Aorta (tissue), 5 donors: ENCODE measurements at regions of chr2 and their contacts with region 1.

Region 1: GRCh38 chr2:187453078-187453641 is 5.1 kb upstream of the CALCRL start:
- DNase-seq: no peak
- ATAC-seq: no peak
- H3K4me3 ChIP-seq: no peak overlapping the region
- H3K27ac ChIP-seq: no peak overlapping the region
- H3K4me1 ChIP-seq: peaks cover 0 to 1% of the 10 kb centered on the region in 2 donors
- H3K27me3 ChIP-seq: no peaks in the 10 kb centered on the region

Region 2: DNA sequence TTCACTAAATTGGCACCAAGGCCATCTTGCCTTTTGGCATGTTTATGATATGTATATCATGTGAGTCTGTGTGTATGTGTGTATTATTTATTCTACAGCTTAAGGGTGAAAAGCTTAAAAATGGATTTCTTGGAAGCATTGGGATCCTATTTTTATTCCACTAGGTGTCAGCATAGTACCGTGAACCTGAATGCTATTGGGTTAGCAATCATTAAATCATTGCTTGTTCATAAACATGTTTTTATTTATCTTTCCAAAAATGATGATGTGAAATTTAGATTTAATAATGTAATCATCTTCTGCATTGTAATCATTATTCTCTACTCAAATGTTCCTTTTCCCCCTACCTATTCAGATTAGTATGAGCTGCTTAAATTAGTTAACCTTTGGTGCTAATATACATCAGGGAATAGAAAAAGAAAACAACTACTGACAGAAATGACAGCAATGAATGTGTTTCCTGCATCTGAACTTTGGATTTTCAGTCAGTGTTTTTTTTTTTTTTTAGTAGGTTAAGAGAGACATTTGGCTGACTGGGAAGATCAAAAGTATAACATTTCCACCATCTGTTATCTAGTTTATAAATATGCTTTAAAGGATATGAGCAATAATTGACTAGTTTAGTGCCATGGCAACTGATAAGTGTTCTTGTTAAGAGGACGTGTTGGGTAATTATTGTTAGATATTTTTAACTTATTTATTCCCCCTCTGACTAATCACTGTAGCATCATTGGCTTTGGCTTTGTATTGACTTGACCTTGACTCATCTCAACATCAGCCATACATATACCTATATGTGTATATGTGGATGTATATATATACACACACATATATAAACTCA is 590.1 kb before region 1 on chr2:
- intact Hi-C with region 1: loop called (anchors 2 to 5 kb)
- DNase-seq: no peak
- ATAC-seq: no peak
- H3K4me3 ChIP-seq: no peak overlapping the region
- H3K27ac ChIP-seq: no peak overlapping the region
- H3K4me1 ChIP-seq: no peaks in the 10 kb centered on the region
- H3K27me3 ChIP-seq: no peaks in the 10 kb centered on the region

Region 3: DNA sequence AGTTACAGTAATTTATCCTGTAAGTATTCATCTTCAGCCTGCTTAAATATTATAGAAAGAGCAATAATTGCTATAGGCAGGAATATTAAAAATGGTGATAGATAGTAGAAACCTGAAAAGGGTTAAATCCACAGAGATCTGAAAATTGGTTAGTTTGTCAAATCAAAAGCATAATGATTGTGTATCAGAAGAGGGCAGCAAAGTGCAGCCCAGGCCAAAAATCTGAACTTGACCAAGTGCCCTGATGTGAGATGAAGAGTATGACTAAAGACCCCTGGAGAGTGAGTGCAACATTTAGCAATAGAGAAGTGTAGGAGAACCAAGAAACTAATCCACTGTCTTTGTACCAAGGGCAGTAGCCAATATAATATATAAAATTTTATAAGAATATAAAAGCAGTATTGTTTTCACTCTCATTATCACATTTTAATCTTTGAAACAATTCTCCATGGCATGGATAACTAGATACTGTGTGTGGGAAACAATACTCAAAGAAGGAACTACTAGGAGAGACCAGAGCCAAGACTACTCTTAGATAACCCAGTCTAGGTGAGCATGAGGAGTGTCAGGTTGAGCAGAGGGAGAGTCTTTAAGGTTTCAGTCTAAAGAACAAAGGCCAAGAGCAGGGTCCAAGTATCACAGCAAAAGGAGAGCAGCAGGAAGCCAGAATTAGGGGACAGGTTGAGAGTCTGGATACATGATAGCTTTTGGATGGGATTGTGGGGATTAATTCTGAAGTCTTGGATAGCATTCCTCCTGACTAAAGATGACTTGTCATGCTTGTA is 153.8 kb before region 1 on chr2:
- intact Hi-C with region 1: loop called in 1 of 2 experiments (anchors 5 kb)
- DNase-seq: no peak
- ATAC-seq: peak; percentile 63
- H3K4me3 ChIP-seq: no peak overlapping the region
- H3K27ac ChIP-seq: no peak overlapping the region
- H3K4me1 ChIP-seq: no peaks in the 10 kb centered on the region
- H3K27me3 ChIP-seq: no peaks in the 10 kb centered on the region